Caco-2 (cell line): ENCODE measurements at regions of chr17 and their contacts with region 1.

Region 1: GRCh38 chr17:41648411-41649195 is 24.2 kb upstream of the KRT17 start:
- DNase-seq: peak; percentile 89 to 94
- H3K4me3 ChIP-seq: peak overlapping the region; percentile 47
- H3K4me3 Mint-ChIP-seq: peak overlapping the region; percentile 81
- H3K27ac Mint-ChIP-seq: peak overlapping the region; percentile 36
- H3K4me1 ChIP-seq: peaks cover 35% of the 10 kb centered on the region
- H3K4me1 Mint-ChIP-seq: peaks cover 7% of the 10 kb centered on the region
- H3K27me3 ChIP-seq: no peaks in the 10 kb centered on the region
- H3K27me3 Mint-ChIP-seq: no peaks in the 10 kb centered on the region
- CTCF ChIP-seq: peak; percentile 95 to 96

Region 2: GRCh38 chr17:40803617-40804082 is 845.0 kb before region 1 on chr17:
- CTCF ChIA-PET with region 1: interaction called, 7 read pairs
- POLR2A ChIA-PET with region 1: no interaction called
- intact Hi-C with region 1: loop called (anchors 5 kb)
- DNase-seq: peak; percentile 87 to 91
- H3K4me3 ChIP-seq: no peak overlapping the region
- H3K4me3 Mint-ChIP-seq: no peak overlapping the region
- H3K27ac Mint-ChIP-seq: no peak overlapping the region
- H3K4me1 ChIP-seq: 0 out of 2 replicates have a peak, but pooled peaks cover 5% of the 10 kb centered on the region
- H3K4me1 Mint-ChIP-seq: no peaks in the 10 kb centered on the region
- H3K27me3 ChIP-seq: no peaks in the 10 kb centered on the region
- H3K27me3 Mint-ChIP-seq: peaks cover 4% of the 10 kb centered on the region
- CTCF ChIP-seq: peak; percentile 96

Region 3: DNA sequence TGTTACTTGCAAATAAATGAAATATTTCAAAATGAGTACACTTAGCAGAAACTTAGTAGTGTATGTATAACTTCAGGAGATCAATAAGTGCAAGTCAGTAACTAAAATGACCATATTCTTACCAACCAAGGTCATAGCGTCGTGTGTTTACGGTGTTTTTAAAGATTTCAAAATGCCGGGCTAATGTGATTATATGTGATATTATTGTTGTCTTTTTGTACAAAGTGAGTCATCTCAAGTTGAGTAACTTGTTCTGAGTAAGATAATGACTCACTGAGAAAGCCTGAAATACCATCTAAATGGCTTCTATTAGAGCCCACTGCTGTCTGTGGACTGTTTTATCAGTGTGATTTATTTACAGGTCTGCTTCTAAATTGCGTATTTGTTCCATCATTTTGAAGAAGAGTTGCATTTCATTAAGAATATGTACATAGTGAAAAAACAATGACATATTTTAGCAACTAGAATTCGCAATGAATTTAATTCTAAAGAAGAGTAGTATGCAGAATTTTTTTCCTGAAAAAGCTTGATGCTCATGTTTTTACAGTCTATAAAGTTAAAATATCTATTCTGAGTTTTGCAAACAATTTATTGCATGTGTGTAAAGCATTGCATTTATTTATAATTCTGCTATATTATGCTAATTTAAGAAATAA is 794.3 kb before region 1 on chr17:
- CTCF ChIA-PET with region 1: interaction called, 6 read pairs
- POLR2A ChIA-PET with region 1: no interaction called
- intact Hi-C with region 1: loop called (anchors 1 kb)
- DNase-seq: no peak
- H3K4me3 ChIP-seq: no peak overlapping the region
- H3K4me3 Mint-ChIP-seq: no peak overlapping the region
- H3K27ac Mint-ChIP-seq: no peak overlapping the region
- H3K4me1 ChIP-seq: peaks cover 13% of the 10 kb centered on the region
- H3K4me1 Mint-ChIP-seq: peaks cover 19% of the 10 kb centered on the region
- H3K27me3 ChIP-seq: no peaks in the 10 kb centered on the region
- H3K27me3 Mint-ChIP-seq: no peaks in the 10 kb centered on the region
- CTCF ChIP-seq: no peak

Region 4: DNA sequence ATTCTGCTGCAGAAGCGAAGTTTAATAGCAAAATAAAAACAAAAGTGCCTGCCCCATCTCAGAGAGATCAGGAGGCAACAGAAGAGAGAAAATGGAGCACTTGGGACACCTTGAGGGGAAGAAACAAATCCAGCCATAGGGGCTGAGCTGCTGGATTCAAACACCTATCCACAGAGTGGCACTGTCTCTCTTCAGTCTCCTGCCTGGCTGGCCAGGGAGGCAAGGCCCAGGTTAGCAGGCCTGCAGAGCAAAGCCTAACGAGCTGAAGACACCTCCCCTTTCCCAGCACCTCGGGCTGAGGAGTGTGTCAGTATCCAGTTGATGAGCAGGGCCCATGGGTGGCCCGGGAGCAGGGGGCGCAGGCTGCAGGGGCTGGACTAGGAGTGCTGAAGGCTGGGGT is 242.4 kb before region 1 on chr17:
- CTCF ChIA-PET with region 1: interaction called, 4 read pairs
- POLR2A ChIA-PET with region 1: no interaction called
- intact Hi-C with region 1: loop called (anchors 5 kb)
- DNase-seq: peak; percentile 48 to 66
- H3K4me3 ChIP-seq: no peak overlapping the region
- H3K4me3 Mint-ChIP-seq: no peak overlapping the region
- H3K27ac Mint-ChIP-seq: no peak overlapping the region
- H3K4me1 ChIP-seq: peaks cover 7% of the 10 kb centered on the region; the same call in 1 of the 2 replicates
- H3K4me1 Mint-ChIP-seq: peaks cover 9% of the 10 kb centered on the region
- H3K27me3 ChIP-seq: no peaks in the 10 kb centered on the region
- H3K27me3 Mint-ChIP-seq: no peaks in the 10 kb centered on the region
- CTCF ChIP-seq: peak; percentile 14 to 46

Region 5: DNA sequence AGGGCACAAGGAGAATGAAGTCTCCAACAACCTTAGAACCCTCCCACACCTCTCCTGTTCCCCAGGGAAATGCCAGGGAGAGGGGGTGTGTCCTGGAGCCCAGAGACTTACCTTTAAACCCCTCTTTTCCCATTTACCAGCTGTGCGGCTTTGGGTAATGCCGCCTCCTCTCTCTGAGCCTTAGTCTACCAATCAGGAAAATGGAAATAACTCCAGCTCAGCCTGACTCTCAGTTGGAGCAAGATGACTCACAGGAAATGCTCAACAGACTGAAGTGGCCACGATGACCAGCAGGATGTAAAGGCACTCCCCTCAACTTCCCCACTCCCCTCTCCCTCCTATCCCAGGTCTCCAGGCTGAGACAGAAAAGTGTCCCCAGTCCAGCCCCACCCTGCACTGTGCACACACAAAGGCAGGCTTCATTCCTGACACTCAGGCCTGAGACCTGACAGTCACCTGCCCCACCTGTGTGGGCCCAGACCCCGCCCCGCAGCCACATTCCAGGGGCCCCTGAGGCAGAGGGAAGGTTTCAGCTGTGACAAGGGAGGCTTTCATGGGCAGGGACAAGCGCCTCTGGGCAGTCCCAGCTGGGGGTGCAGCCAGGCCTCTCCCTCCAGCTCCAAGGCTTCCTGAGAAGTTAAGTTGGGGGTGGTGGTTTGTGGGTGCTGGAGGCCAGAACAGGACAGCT is 126.9 kb before region 1 on chr17:
- CTCF ChIA-PET with region 1: interaction called, 16 read pairs
- POLR2A ChIA-PET with region 1: interaction called, 9 read pairs
- intact Hi-C with region 1: no loop called
- DNase-seq: peak; percentile 97 to 99
- H3K4me3 ChIP-seq: no peak overlapping the region
- H3K4me3 Mint-ChIP-seq: peak overlapping the region; percentile 68
- H3K27ac Mint-ChIP-seq: peak overlapping the region; percentile 97
- H3K4me1 ChIP-seq: peaks cover 66% of the 10 kb centered on the region
- H3K4me1 Mint-ChIP-seq: peaks cover 51% of the 10 kb centered on the region
- H3K27me3 ChIP-seq: no peaks in the 10 kb centered on the region
- H3K27me3 Mint-ChIP-seq: no peaks in the 10 kb centered on the region
- CTCF ChIP-seq: no peak

Region 6: GRCh38 chr17:41548844-41549595 is 99.6 kb before region 1 on chr17:
- CTCF ChIA-PET with region 1: interaction called, 66 read pairs
- POLR2A ChIA-PET with region 1: interaction called, 4 read pairs
- intact Hi-C with region 1: loop called (anchors 1 kb)
- DNase-seq: peak; percentile 85 to 87
- H3K4me3 ChIP-seq: no peak overlapping the region
- H3K4me3 Mint-ChIP-seq: peak overlapping the region; percentile 5
- H3K27ac Mint-ChIP-seq: peak overlapping the region; percentile 77
- H3K4me1 ChIP-seq: peaks cover 46% of the 10 kb centered on the region
- H3K4me1 Mint-ChIP-seq: peaks cover 49% of the 10 kb centered on the region
- H3K27me3 ChIP-seq: no peaks in the 10 kb centered on the region
- H3K27me3 Mint-ChIP-seq: no peaks in the 10 kb centered on the region
- CTCF ChIP-seq: peak; percentile 90 to 94